ENCODE measurements at regions of chr10 and their contacts with region 1.

Region 1: GRCh38 chr10:17847585-17848296 is 38.6 kb downstream of the MRC1 start:
- DNase-seq: no peak
- H3K4me3 ChIP-seq: no peak overlapping the region
- H3K27ac ChIP-seq: no peak overlapping the region
- H3K4me1 ChIP-seq: peaks cover 0 to 4% (median 2%) of the 10 kb centered on the region in 4 experiments; a peak in 3 of 7 replicates
- H3K27me3 ChIP-seq: no peaks in the 10 kb centered on the region
- CTCF ChIP-seq: peak in 2 of 3 experiments; percentile 18 to 23; a peak in 2 of 4 replicates
- EP300 ChIP-seq: no peak
- POLR2A ChIP-seq: no peak
- RAD21 ChIP-seq: peak; percentile 44 to 69

Region 2: GRCh38 chr10:17872191-17873091 is 24.7 kb after region 1 on chr10:
- CTCF ChIA-PET with region 1: interaction called, 18 read pairs
- POLR2A ChIA-PET with region 1: no interaction called
- DNase-seq: no peak
- H3K4me3 ChIP-seq: no peak overlapping the region
- H3K27ac ChIP-seq: no peak overlapping the region
- H3K4me1 ChIP-seq: peaks cover 0 to 5% (median 0%) of the 10 kb centered on the region in 4 experiments; a peak in 1 of 7 replicates
- H3K27me3 ChIP-seq: no peaks in the 10 kb centered on the region
- CTCF ChIP-seq: peak in 2 of 3 experiments; percentile 51 to 52; a peak in 3 of 4 replicates
- EP300 ChIP-seq: no peak
- POLR2A ChIP-seq: no peak
- RAD21 ChIP-seq: peak; percentile 76 to 80

Region 3: DNA sequence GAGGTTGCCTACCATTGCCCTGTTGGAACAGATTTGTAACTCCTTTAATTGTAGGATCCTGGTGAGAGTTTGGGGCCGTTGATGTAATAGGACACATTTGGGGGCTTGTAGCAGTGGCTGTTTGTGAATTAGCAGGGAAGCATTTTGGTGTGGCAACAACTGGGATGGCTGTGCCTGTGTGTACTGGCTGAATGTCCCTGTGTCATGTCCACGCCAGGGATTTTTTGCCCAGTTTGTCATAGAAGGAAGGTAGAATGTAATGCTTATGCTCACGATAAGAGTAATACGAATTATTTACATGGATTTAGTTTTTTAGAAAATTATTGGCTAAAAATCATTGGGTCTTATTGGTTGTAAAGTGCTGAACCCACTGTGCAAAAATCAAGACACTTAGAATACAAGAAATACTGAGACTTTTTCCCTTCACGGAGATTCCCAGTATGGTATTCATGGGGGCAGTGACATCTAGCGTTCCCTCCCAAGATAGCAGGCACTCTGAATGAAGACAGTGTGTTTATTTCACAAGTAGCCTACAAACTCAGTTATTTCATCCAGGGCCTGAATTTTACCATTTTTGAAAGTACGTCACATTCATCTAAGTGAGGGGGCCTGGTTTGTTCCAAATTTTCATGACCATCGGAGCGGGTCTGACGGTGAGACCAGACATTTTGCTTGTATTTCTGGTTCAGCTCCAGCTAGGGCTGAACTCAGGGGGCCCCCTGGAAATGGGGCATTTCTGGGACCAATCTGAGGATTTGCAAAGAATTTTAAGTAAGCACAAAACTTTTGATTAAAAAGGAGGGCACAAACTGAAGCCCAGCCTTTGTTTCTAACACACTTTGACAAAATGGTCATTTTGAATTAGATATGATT is 367.2 kb after region 1 on chr10:
- CTCF ChIA-PET with region 1: interaction called, 19 read pairs
- POLR2A ChIA-PET with region 1: no interaction called
- DNase-seq: peak in 1 of 2 experiments; percentile 59
- H3K4me3 ChIP-seq: no peak overlapping the region
- H3K27ac ChIP-seq: no peak overlapping the region
- H3K4me1 ChIP-seq: no peaks in the 10 kb centered on the region
- H3K27me3 ChIP-seq: no peaks in the 10 kb centered on the region
- CTCF ChIP-seq: peak in 2 of 3 experiments; percentile 61 to 83; a peak in 3 of 4 replicates
- EP300 ChIP-seq: no peak
- POLR2A ChIP-seq: no peak
- RAD21 ChIP-seq: peak; percentile 89 to 90

Region 4: DNA sequence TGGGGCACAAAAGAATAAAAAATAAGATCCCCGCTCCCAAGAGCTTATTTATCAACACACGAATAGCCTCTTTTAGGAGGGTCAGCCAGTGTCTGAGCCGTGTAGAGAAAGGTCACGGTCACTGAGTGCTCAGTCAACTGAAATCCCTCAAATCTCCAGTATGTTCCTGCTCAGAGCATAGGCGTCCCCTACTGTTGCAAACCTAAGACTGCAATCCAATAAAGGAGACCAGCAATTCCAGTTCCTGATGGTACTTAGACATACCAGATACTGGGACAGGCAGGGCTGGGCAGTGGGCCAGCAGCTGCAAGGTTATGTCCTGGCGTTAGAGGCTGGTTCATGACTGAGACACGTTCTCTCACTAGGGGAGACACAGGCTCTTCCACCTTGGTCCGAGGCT is 386.0 kb after region 1 on chr10:
- CTCF ChIA-PET with region 1: interaction called, 14 read pairs
- POLR2A ChIA-PET with region 1: no interaction called
- DNase-seq: no peak
- H3K4me3 ChIP-seq: no peak overlapping the region
- H3K27ac ChIP-seq: no peak overlapping the region
- H3K4me1 ChIP-seq: peaks cover 0 to 11% (median 3%) of the 10 kb centered on the region in 4 experiments; a peak in 5 of 7 replicates
- H3K27me3 ChIP-seq: no peaks in the 10 kb centered on the region
- CTCF ChIP-seq: peak; percentile 10 to 79 (median 69)
- EP300 ChIP-seq: no peak
- POLR2A ChIP-seq: no peak
- RAD21 ChIP-seq: peak; percentile 75 to 79

Measured in H1 (cell line).